ENCODE measurements at regions of chr3 and their contacts with region 1.

Region 1: GRCh38 chr3:183825456-183826161 is at the start of gene MAP6D1:
- DNase-seq: no peak
- H3K4me3 ChIP-seq: peak within 1 kb of the TSS; percentile 68
- CTCF ChIP-seq: peak; percentile 66

Region 2: DNA sequence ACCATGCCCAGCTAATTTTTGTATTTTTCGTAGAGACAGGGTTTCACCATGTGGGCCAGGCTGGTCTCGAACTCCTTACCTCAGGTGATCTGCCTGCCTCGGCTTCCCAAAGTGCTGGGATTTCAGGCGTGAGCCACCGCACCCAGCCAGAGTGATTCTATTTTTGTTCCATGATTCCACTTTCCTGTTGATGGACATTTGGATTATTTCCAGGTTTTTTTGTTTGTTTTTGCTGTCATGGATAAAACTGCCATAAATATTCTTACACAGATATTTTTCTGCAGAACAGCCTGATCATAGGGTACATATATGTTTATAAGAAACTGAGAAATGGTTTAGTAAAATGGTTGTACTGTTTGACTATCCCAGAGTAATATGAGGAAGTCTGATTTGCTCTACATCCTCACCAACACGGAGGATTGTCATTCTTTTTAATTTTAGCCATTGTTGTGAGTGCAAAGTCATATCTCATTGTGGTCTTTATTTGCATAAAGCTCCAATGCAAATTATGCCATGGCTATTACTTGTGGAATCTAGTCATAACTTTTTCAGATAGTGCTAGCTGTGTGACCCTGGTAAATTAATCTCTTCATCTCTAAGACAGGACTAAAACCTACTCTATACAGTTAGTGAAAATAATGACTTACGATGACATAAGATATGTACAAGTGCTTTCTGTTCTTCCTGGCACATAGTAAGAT is 42.9 kb before region 1 on chr3:
- CTCF ChIA-PET with region 1: no interaction called
- POLR2A ChIA-PET with region 1: no interaction called
- DNase-seq: no peak
- H3K4me3 ChIP-seq: no peak overlapping the region
- CTCF ChIP-seq: no peak

Region 3: GRCh38 chr3:183839751-183840150 is 14.1 kb after region 1 on chr3:
- CTCF ChIA-PET with region 1: interaction called, 16 read pairs
- POLR2A ChIA-PET with region 1: no interaction called
- DNase-seq: no peak
- H3K4me3 ChIP-seq: no peak overlapping the region
- CTCF ChIP-seq: no peak

Measured in AG04449 (cell line).